Heart right ventricle (tissue), 16 donors: ENCODE measurements at regions of chr4 and their contacts with region 1.

Region 1: GRCh38 chr4:78517050-78517652 is 34.4 kb upstream of the ANXA3 start:
- DNase-seq: no peak
- ATAC-seq: peak in 1 of 8 donors; percentile 65
- H3K4me3 ChIP-seq: no peak overlapping the region
- H3K27ac ChIP-seq: no peak overlapping the region
- H3K4me1 ChIP-seq: peaks cover 0 to 15% (median 11%) of the 10 kb centered on the region in 9 donors
- H3K27me3 ChIP-seq: no peaks in the 10 kb centered on the region
- CTCF ChIP-seq: peak; percentile 51 to 80 (median 65)

Region 2: DNA sequence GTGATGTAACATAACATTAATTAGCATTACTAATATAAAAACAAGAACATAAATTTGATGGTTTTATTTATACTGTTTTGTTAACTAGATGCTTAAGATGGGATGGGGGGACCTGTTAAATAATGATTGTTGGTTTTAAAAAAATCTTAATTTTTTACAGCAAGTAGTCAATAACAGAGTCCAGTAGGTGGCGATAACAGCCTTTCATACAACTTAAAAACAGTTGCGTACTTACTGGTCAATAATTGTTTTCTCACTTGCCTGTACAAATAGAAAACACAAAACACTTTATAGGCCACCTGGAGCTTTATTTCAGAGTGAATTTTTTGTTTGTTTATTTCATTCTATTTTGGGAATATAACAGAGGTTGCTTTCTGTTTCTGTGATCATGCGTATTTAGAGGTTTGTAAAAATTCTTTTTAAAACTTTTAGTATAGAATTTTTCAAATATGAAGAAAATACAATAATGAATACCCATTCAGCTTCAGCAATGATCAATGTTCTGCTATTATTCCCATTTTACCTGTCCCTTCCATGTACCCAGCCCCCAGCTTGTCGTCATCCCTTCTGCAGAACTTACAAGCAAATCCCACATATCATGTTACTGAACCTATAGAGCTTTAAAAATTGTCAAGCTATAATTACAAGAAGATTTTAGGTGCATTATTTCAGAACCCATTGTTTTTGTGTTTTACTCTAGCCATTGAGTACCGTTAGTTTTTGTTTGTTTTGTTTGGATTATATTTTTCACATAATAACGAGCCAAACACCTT is 557.4 kb before region 1 on chr4:
- intact Hi-C with region 1: loop called in 8 of 10 experiments (anchors 1 to 10 kb)
- DNase-seq: peak in 1 of 2 donors; percentile 21
- ATAC-seq: no peak
- H3K4me3 ChIP-seq: peak overlapping the region in 5 of 10 donors; percentile 6 to 28 (median 21)
- H3K27ac ChIP-seq: no peak overlapping the region
- H3K4me1 ChIP-seq: peaks cover 0 to 5% (median 0%) of the 10 kb centered on the region in 9 donors
- H3K27me3 ChIP-seq: no peaks in the 10 kb centered on the region
- CTCF ChIP-seq: peak; percentile 37 to 76 (median 68)

Region 3: DNA sequence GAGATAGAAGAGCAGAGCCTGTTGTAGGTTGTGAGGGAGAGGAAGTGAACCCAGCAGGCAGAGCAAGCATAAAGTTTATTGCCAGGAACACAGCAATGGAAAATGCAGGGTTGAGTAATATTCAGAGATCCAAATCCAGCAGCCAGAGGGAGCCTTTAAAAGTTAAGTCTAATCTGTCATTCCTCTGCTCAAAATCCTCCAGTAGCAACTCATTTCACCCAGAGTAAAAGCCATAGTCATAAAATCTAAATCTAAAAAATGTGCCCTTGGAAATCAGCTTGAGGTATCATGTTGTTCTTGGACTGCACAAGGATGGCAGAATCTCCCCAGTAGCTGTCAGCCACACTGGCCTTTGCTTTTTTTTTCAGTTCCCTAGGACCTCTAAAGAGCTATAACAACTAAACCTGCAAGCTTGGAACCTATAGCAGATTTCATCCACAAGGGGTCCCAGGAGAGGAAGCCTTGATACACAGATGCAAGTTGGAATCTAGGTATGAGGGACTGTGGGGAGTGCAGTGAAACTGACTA is 522.9 kb before region 1 on chr4:
- intact Hi-C with region 1: loop called in 5 of 10 experiments (anchors 10 kb)
- DNase-seq: peak in 1 of 2 donors; percentile 11
- ATAC-seq: peak in 7 of 8 donors; percentile 51 to 75 (median 71)
- H3K4me3 ChIP-seq: no peak overlapping the region
- H3K27ac ChIP-seq: no peak overlapping the region
- H3K4me1 ChIP-seq: peaks cover 0 to 4% (median 0%) of the 10 kb centered on the region in 9 donors
- H3K27me3 ChIP-seq: no peaks in the 10 kb centered on the region
- CTCF ChIP-seq: peak in 8 of 9 donors; percentile 9 to 65 (median 55)

Region 4: GRCh38 chr4:78056265-78057129 is 460.7 kb before region 1 on chr4:
- intact Hi-C with region 1: loop called in 6 of 10 experiments (anchors 5 to 10 kb)
- DNase-seq: peak; percentile 53 to 84
- ATAC-seq: peak; percentile 63 to 86 (median 81)
- H3K4me3 ChIP-seq: peak overlapping the region; percentile 54 to 77 (median 70)
- H3K27ac ChIP-seq: peak overlapping the region; percentile 35 to 93 (median 82)
- H3K4me1 ChIP-seq: peaks cover 0 to 37% (median 16%) of the 10 kb centered on the region in 9 donors
- H3K27me3 ChIP-seq: peaks cover 0 to 64% (median 0%) of the 10 kb centered on the region in 7 donors
- CTCF ChIP-seq: peak in 3 of 9 donors; percentile 19 to 22 (median 22)

Region 5: GRCh38 chr4:78222575-78223186 is 294.5 kb before region 1 on chr4:
- intact Hi-C with region 1: no loop called
- DNase-seq: no peak
- ATAC-seq: no peak
- H3K4me3 ChIP-seq: no peak overlapping the region
- H3K27ac ChIP-seq: no peak overlapping the region
- H3K4me1 ChIP-seq: no peaks in the 10 kb centered on the region
- H3K27me3 ChIP-seq: no peaks in the 10 kb centered on the region
- CTCF ChIP-seq: no peak

Region 6: DNA sequence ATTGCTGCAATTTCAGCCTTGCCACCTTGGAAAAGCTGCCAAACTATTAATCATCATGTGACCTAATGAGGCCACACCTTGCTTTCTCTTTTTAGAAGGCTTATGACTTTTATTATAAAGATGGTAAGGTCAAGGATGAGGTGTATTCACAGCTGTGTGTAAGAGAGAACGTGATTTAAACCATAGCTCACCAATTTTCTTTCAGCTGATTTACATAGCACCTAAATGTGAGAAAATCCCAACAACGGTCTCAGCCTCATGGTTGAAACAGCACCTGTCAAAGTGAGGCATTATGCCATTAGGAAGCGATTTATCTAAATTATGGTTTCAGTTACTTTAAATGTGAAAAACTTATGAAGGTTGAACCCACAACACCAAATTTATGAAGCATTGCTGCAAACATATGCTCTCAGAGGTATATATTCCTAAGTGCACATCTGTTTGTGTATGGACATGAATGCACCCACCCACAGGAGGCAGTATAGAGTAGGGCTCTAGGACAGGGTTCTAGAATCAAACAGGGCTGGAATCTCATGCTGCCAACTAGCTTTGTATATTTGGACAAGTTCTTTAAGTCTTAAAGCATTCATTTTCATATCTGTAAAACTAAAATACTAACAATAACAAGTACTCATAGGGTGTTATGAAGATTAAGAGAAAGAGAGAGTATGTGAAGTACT is 75.1 kb after region 1 on chr4:
- intact Hi-C with region 1: loop called in 1 of 10 experiments (anchors 5 kb)
- DNase-seq: no peak
- ATAC-seq: peak in 1 of 8 donors; percentile 10
- H3K4me3 ChIP-seq: no peak overlapping the region
- H3K27ac ChIP-seq: peak overlapping the region in 7 of 10 donors; percentile 1 to 81 (median 53)
- H3K4me1 ChIP-seq: peaks cover 0 to 38% (median 19%) of the 10 kb centered on the region in 9 donors
- H3K27me3 ChIP-seq: no peaks in the 10 kb centered on the region
- CTCF ChIP-seq: peak in 7 of 9 donors; percentile 28 to 48 (median 31)

Region 7: DNA sequence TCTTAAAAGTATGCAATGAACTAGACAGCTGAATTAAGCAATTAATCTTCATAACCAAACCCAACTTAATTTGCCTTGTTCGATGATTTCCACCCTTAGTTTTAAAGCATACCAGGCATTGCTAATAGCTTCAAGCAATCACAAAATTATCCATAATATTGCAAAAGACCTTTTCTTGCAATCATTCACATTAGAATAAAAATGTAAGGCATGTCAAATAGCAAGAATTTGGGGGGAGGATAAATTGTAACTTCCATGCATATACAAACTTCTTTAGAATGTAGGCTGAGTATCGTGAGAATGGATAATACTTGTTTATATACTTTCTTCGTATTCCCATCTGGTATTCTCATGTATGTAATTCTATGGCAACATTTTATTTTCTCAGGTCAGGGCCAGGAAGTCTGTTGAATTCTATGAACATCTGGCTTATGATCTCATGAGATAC is 230.3 kb after region 1 on chr4:
- intact Hi-C with region 1: no loop called
- DNase-seq: no peak
- ATAC-seq: no peak
- H3K4me3 ChIP-seq: no peak overlapping the region
- H3K27ac ChIP-seq: no peak overlapping the region
- H3K4me1 ChIP-seq: peaks cover 0 to 33% (median 25%) of the 10 kb centered on the region in 9 donors
- H3K27me3 ChIP-seq: no peaks in the 10 kb centered on the region
- CTCF ChIP-seq: no peak

Region 8: GRCh38 chr4:78864405-78865024 is 347.4 kb after region 1 on chr4:
- intact Hi-C with region 1: loop called in 1 of 10 experiments (anchors 10 kb)
- DNase-seq: peak in 1 of 2 donors; percentile 54
- ATAC-seq: peak in 6 of 8 donors; percentile 47 to 68 (median 61)
- H3K4me3 ChIP-seq: no peak overlapping the region
- H3K27ac ChIP-seq: no peak overlapping the region
- H3K4me1 ChIP-seq: peaks cover 0 to 6% (median 0%) of the 10 kb centered on the region in 9 donors
- H3K27me3 ChIP-seq: no peaks in the 10 kb centered on the region
- CTCF ChIP-seq: peak; percentile 46 to 93 (median 85)